ENCODE measurements at regions of chr1 and their contacts with region 1.

Region 1: GRCh38 chr1:15323351-15323988 is 76.4 kb downstream of the FHAD1 start:
- DNase-seq: peak; percentile 82
- ATAC-seq: peak; percentile 76
- H3K4me3 ChIP-seq: no peak overlapping the region
- H3K4me3 Mint-ChIP-seq: no peak overlapping the region
- H3K27ac ChIP-seq: no peak overlapping the region
- H3K27ac Mint-ChIP-seq: no peak overlapping the region
- H3K4me1 ChIP-seq: peaks cover 0 to 5% of the 10 kb centered on the region in 2 donors
- H3K4me1 Mint-ChIP-seq: no peaks in the 10 kb centered on the region
- H3K27me3 ChIP-seq: peaks cover 0 to 5% (median 0%) of the 10 kb centered on the region in 4 experiments
- H3K27me3 Mint-ChIP-seq: peaks cover 18% of the 10 kb centered on the region
- CTCF ChIP-seq: peak; percentile 95

Region 2: DNA sequence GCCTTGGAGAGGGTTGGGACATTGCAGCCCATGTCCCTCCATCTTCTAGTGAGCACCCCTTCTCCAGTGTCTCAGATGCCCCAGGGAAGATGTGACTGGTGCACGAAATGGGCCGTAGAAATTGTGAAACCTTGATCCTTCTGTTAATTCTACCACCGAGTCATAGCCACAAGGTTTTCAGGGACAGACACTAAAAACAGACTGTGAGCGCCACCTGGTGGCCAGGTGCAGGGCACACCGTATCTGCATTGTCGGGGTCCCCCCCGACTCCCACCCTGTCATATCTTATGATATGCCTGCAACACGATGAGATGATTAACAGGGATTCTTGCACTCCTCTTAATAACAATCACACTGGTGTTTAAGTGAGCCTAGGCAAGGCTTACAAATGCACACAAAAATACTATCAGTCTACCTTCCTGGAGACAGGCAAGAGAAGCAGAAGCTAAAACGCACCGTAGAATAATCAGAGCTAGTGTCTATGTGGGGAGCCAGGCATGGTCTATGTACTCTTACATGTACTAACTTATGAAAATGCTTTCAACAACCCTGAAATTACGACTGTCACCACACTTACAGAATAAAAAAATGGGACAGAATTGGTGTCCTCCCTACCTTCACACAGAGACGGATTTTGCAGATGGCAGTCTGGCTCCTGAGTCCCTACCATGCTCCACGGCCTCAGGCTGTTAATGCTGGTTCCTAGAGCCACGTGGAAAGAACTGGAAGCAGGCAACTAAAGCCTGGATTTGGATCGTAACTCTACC is 18.6 kb before region 1 on chr1:
- CTCF ChIA-PET with region 1: interaction called, 11 read pairs
- POLR2A ChIA-PET with region 1: no interaction called
- intact Hi-C with region 1: no loop called
- DNase-seq: peak; percentile 65
- ATAC-seq: peak; percentile 36
- H3K4me3 ChIP-seq: no peak overlapping the region
- H3K4me3 Mint-ChIP-seq: no peak overlapping the region
- H3K27ac ChIP-seq: no peak overlapping the region
- H3K27ac Mint-ChIP-seq: no peak overlapping the region
- H3K4me1 ChIP-seq: no peaks in the 10 kb centered on the region
- H3K4me1 Mint-ChIP-seq: no peaks in the 10 kb centered on the region
- H3K27me3 ChIP-seq: no peaks in the 10 kb centered on the region
- H3K27me3 Mint-ChIP-seq: peaks cover 7% of the 10 kb centered on the region
- CTCF ChIP-seq: peak; percentile 84

Region 3: DNA sequence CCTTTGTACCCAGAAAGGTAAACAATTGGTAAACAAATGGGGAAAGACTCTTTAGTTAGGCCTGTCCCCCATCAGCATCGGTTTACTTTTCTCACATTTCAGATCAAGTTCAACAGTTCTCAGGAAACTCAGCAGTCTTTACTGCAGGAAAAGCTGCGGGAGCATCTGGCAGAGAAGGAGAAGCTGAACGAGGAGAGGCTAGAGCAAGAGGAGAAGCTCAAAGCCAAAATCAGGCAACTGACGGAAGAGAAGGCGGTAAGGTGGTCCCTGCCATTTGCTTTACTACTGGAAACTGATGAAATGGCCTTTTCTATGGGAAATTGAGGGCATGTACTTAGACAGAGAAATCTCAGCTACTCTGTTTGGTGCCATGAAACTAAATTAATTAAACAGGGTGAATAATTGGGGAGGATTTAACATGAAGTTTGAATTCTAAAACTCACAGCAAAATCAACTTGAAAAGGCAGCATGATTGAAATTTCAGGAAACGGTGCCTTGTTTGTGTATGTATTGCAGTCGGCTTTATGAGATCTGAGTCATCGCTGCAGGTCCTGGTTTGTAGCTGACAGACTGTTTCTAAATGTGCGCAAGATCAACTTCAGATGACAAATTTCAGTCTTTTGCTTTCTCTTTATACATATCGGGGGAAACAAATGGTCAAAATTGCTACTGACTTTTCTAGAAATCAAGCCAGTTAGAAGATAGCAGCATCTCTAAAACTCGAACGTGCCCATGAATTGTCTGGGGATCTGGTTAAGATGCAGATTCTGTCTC is 18.4 kb after region 1 on chr1:
- CTCF ChIA-PET with region 1: interaction called, 10 read pairs
- POLR2A ChIA-PET with region 1: no interaction called
- intact Hi-C with region 1: no loop called
- DNase-seq: no peak
- ATAC-seq: no peak
- H3K4me3 ChIP-seq: no peak overlapping the region
- H3K4me3 Mint-ChIP-seq: no peak overlapping the region
- H3K27ac ChIP-seq: no peak overlapping the region
- H3K27ac Mint-ChIP-seq: no peak overlapping the region
- H3K4me1 ChIP-seq: peaks cover 5 to 15% of the 10 kb centered on the region in 2 donors
- H3K4me1 Mint-ChIP-seq: peaks cover 12% of the 10 kb centered on the region
- H3K27me3 ChIP-seq: peaks cover 0 to 10% (median 3%) of the 10 kb centered on the region in 4 experiments
- H3K27me3 Mint-ChIP-seq: peaks cover 50% of the 10 kb centered on the region
- CTCF ChIP-seq: no peak

Region 4: GRCh38 chr1:15430787-15431570 is 107.5 kb after region 1 on chr1:
- CTCF ChIA-PET with region 1: interaction called, 292 read pairs
- POLR2A ChIA-PET with region 1: no interaction called
- intact Hi-C with region 1: no loop called
- DNase-seq: peak; percentile 83
- ATAC-seq: peak; percentile 86
- H3K4me3 ChIP-seq: no peak overlapping the region
- H3K4me3 Mint-ChIP-seq: no peak overlapping the region
- H3K27ac ChIP-seq: peak overlapping the region in 1 of 2 donors; percentile 28
- H3K27ac Mint-ChIP-seq: no peak overlapping the region
- H3K4me1 ChIP-seq: no peaks in the 10 kb centered on the region
- H3K4me1 Mint-ChIP-seq: no peaks in the 10 kb centered on the region
- H3K27me3 ChIP-seq: no peaks in the 10 kb centered on the region
- H3K27me3 Mint-ChIP-seq: no peaks in the 10 kb centered on the region
- CTCF ChIP-seq: peak; percentile 98

Region 5: GRCh38 chr1:15436881-15437442 is 113.5 kb after region 1 on chr1:
- CTCF ChIA-PET with region 1: interaction called, 292 read pairs
- POLR2A ChIA-PET with region 1: no interaction called
- intact Hi-C with region 1: no loop called
- DNase-seq: no peak
- ATAC-seq: no peak
- H3K4me3 ChIP-seq: no peak overlapping the region
- H3K4me3 Mint-ChIP-seq: no peak overlapping the region
- H3K27ac ChIP-seq: no peak overlapping the region
- H3K27ac Mint-ChIP-seq: no peak overlapping the region
- H3K4me1 ChIP-seq: no peaks in the 10 kb centered on the region
- H3K4me1 Mint-ChIP-seq: no peaks in the 10 kb centered on the region
- H3K27me3 ChIP-seq: no peaks in the 10 kb centered on the region
- H3K27me3 Mint-ChIP-seq: no peaks in the 10 kb centered on the region
- CTCF ChIP-seq: no peak

Region 6: GRCh38 chr1:15741183-15741850 is 417.8 kb after region 1 on chr1:
- CTCF ChIA-PET with region 1: no interaction called
- POLR2A ChIA-PET with region 1: no interaction called
- intact Hi-C with region 1: loop called (anchors 5 kb)
- DNase-seq: peak; percentile 79
- ATAC-seq: peak; percentile 91
- H3K4me3 ChIP-seq: no peak overlapping the region
- H3K4me3 Mint-ChIP-seq: no peak overlapping the region
- H3K27ac ChIP-seq: no peak overlapping the region
- H3K27ac Mint-ChIP-seq: no peak overlapping the region
- H3K4me1 ChIP-seq: peaks cover 0 to 7% of the 10 kb centered on the region in 2 donors
- H3K4me1 Mint-ChIP-seq: peaks cover 6% of the 10 kb centered on the region
- H3K27me3 ChIP-seq: no peaks in the 10 kb centered on the region
- H3K27me3 Mint-ChIP-seq: no peaks in the 10 kb centered on the region
- CTCF ChIP-seq: peak; percentile 80